Prostate gland (tissue), 2 donors: ENCODE measurements at regions of chr14 and their contacts with region 1.

Region 1: GRCh38 chr14:96424109-96424989 is 32.4 kb downstream of the AK7 start:
- DNase-seq: peak; percentile 50
- H3K4me3 ChIP-seq: peak overlapping the region; percentile 14 to 19
- H3K27ac ChIP-seq: no peak overlapping the region
- H3K4me1 ChIP-seq: no peaks in the 10 kb centered on the region
- H3K27me3 ChIP-seq: no peaks in the 10 kb centered on the region
- CTCF ChIP-seq: peak; percentile 57 to 89 (median 82)
- POLR2A ChIP-seq: no peak

Region 2: DNA sequence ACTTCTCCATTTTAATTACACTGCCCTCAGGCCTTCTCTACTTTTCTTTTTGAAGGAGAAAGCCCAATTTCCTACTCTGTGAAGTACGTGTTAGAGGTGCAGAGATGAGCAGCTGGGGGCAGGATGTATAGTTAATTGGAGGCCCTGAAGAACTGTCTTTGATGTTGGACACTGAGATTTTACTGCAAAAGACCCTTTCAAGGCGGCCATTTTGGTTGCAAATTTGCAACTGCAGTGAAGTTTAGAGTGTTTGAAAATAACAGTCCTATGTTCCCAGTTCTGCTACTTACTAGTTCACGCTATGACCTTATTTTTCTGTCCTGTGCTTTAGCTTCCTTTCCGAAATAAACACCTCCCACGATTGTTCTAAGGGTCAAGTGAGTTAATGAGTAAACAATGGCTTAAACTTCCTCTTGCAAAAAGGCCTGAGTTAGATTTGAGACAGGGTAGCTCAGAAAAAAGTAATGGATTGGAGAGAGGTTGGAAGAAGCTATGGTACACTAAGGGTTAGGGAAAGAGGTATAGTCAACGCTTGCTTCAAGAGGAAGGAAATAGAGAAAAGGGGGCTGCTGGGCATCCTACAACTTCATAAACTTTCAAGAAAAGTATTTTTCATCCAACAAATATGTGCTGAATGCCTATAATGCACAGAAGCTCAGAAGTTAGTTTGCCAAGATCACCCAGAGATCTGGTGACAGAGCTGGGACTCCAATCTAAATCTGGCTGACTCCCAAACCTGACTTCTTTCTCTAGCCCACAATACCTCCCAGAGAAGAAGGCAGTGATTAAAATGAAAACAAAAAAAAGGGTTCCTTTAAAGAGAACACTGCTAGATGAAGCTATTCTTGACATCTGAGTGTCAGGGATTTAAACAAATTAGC is 1240.6 kb before region 1 on chr14:
- intact Hi-C with region 1: no loop called
- DNase-seq: no peak
- H3K4me3 ChIP-seq: no peak overlapping the region
- H3K27ac ChIP-seq: no peak overlapping the region
- H3K4me1 ChIP-seq: no peaks in the 10 kb centered on the region
- H3K27me3 ChIP-seq: no peaks in the 10 kb centered on the region
- CTCF ChIP-seq: no peak
- POLR2A ChIP-seq: no peak

Region 3: GRCh38 chr14:95741038-95741490 is 683.3 kb before region 1 on chr14:
- intact Hi-C with region 1: no loop called
- DNase-seq: peak; percentile 71
- H3K4me3 ChIP-seq: no peak overlapping the region
- H3K27ac ChIP-seq: peak overlapping the region in 1 of 2 donors; percentile 45
- H3K4me1 ChIP-seq: no peaks in the 10 kb centered on the region
- H3K27me3 ChIP-seq: no peaks in the 10 kb centered on the region
- CTCF ChIP-seq: no peak
- POLR2A ChIP-seq: no peak

Region 4: GRCh38 chr14:96297000-96297399 is 127.3 kb before region 1 on chr14:
- intact Hi-C with region 1: loop called (anchors 5 kb)
- DNase-seq: no peak
- H3K4me3 ChIP-seq: no peak overlapping the region
- H3K27ac ChIP-seq: no peak overlapping the region
- H3K4me1 ChIP-seq: no peaks in the 10 kb centered on the region
- H3K27me3 ChIP-seq: no peaks in the 10 kb centered on the region
- CTCF ChIP-seq: peak in 3 of 4 experiments; percentile 38 to 42 (median 40)
- POLR2A ChIP-seq: no peak